Vagina (tissue), 2 donors: ENCODE measurements at regions of chr6 and their contacts with region 1.

Region 1: GRCh38 chr6:133548414-133549159 is 307.4 kb downstream of the EYA4 start:
- DNase-seq: no peak
- H3K4me3 ChIP-seq: no peak overlapping the region
- H3K27ac ChIP-seq: no peak overlapping the region
- H3K4me1 ChIP-seq: no peaks in the 10 kb centered on the region
- H3K27me3 ChIP-seq: no peaks in the 10 kb centered on the region
- CTCF ChIP-seq: no peak
- POLR2A ChIP-seq: no peak

Region 2: GRCh38 chr6:133198725-133199124 is 349.9 kb before region 1 on chr6:
- intact Hi-C with region 1: loop called (anchors 10 kb)
- DNase-seq: no peak
- H3K4me3 ChIP-seq: no peak overlapping the region
- H3K27ac ChIP-seq: no peak overlapping the region
- H3K4me1 ChIP-seq: no peaks in the 10 kb centered on the region
- H3K27me3 ChIP-seq: no peaks in the 10 kb centered on the region
- CTCF ChIP-seq: no peak
- POLR2A ChIP-seq: no peak

Region 3: DNA sequence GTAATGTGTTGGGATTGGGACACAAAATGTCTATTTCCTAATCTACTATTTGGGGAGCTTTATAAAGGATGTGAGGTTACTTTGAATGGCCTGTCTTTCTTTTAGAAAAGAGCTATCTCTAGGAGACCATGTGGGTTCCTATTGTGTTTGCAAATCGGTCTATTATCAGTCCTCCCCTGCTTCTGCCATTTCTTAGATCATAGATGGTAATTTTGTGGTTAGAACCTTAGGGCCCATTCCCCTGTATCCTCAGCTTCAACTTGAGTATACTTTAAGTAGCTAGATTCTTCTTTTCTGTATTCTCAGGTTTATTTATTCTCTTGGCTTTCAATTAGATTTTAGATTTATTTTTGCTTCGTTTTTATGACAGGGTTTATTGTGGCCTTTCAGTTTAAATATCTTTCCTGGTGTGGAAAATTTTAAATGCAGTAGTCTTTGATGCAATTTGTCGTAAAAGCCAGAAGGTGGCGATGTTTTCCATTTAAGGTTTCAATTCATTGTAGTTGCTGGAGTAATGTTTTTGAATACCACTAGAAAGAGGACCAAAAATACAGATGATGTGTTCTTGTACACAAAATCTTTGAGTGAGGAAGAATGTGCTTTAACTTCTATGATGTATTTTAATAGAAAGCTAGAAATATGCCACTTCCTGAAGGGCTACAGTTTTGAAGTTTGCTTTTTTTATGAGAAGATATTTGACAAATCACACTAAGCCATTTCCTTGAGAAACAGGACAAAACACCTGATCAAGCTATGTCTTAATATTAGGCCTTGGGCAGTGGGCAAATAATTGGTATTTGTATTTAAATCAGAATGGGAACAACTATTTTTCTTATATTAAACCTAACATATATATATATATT is 424.8 kb after region 1 on chr6:
- intact Hi-C with region 1: no loop called
- DNase-seq: no peak
- H3K4me3 ChIP-seq: no peak overlapping the region
- H3K27ac ChIP-seq: peak overlapping the region; percentile 10
- H3K4me1 ChIP-seq: peaks cover 29% of the 10 kb centered on the region
- H3K27me3 ChIP-seq: no peaks in the 10 kb centered on the region
- CTCF ChIP-seq: peak; percentile 46 to 55 (median 47)
- POLR2A ChIP-seq: no peak